ENCODE measurements at regions of chr12 and their contacts with region 1.

Region 1: GRCh38 chr12:122336015-122336946 is 70.0 kb upstream of the VPS33A start:
- DNase-seq: peak in 1 of 2 donors; percentile 65
- ATAC-seq: peak in 2 of 4 donors; percentile 36 to 38
- H3K4me3 ChIP-seq: no peak overlapping the region
- H3K27ac ChIP-seq: peak overlapping the region; percentile 33
- H3K4me1 ChIP-seq: peaks cover 6% of the 10 kb centered on the region
- H3K27me3 ChIP-seq: no peaks in the 10 kb centered on the region
- CTCF ChIP-seq: peak; percentile 60

Region 2: DNA sequence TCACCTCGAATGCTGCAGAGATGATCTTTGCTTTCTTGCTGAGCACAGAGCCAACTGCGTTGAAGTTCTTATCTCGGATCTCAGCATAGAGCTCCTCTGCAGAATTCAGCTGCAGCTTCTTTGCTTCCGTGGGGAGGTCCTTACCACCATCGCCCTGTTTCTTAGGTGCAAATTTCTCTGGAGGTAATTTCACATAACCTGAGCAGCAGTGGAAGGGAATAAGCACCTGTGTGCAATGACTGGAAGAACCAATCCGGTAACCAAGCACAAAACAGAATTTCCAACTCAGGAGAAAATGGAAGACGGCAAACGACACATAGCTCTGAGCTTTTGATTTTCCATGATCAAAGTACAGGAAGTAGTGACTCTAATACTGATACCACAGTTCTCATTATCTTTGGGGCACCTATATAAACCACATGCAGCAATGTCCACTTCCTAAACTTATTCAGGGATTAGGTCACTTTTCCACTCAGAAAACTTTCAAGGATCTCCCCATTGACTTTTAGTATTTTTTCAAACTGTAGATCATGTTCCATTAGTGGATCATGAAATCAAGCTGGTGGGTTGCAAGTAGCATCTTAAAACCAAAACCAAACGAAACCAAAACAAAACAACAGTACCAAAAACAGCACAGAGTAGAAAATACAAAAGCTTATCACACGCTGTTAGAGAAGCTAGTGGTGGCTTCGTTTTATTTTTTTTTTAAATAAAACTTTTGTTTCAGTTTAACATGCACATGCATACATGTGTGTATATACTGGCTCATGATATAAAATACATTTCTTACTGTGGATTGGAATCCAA is 91.5 kb before region 1 on chr12:
- intact Hi-C with region 1: no loop called
- DNase-seq: no peak
- ATAC-seq: no peak
- H3K4me3 ChIP-seq: no peak overlapping the region
- H3K27ac ChIP-seq: no peak overlapping the region
- H3K4me1 ChIP-seq: no peaks in the 10 kb centered on the region
- H3K27me3 ChIP-seq: no peaks in the 10 kb centered on the region
- CTCF ChIP-seq: no peak

Region 3: DNA sequence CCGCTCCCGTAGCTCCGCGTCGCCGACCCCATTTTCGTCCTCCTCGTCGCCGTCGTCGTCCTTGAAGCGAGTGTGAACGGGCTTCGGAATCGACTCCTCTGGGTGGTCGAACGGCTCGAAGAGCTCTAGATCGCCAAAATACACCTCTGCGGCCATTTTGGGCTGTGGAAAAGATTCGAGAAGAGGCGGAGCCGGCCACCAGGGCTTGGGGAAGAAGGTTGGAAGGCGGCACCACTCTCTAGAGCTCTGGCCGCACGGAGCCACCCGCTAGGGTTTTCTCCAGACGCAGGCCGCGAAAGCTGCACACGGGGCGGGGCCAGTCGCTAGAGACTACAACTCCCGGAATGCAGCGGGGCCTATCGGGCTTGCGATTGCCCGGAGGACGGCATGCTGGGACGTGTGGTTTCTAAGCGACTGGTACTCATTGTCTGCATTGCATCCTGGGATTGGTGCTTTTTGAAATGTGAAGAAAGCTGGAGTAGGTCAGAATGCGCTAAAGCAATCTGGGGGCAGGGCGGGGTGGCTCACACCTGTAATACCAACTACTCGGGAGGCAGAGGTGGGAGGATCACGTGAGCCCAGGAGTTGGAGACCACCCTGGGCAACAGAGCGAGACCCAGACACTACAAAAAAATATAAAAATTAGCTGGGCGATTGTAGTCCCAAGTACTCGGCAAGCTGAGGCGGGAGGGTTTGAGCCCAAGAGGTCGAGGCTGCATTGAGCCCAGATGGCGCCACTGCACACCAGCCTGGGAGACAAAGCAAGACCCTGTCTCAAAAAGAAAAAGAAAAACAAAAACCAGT is 164.6 kb after region 1 on chr12 and contains the start of gene ZCCHC8:
- intact Hi-C with region 1: loop called (anchors 5 to 10 kb)
- DNase-seq: peak; percentile 97 to 98
- ATAC-seq: peak; percentile 93 to 96 (median 95)
- H3K4me3 ChIP-seq: peak within 1 kb of the TSS; percentile 96
- H3K27ac ChIP-seq: peak within 1 kb of the TSS; percentile 99
- H3K4me1 ChIP-seq: peaks cover 36% of the 10 kb centered on the region
- H3K27me3 ChIP-seq: no peaks in the 10 kb centered on the region
- CTCF ChIP-seq: no peak
- total RNA-seq, gene ZCCHC8: 10.9 to 22.2 (median 14.3) TPM

Region 4: GRCh38 chr12:123319826-123320225 is 983.5 kb after region 1 on chr12:
- intact Hi-C with region 1: loop called in 1 of 2 experiments (anchors 10 kb)
- DNase-seq: no peak
- ATAC-seq: no peak
- H3K4me3 ChIP-seq: no peak overlapping the region
- H3K27ac ChIP-seq: no peak overlapping the region
- H3K4me1 ChIP-seq: no peaks in the 10 kb centered on the region
- H3K27me3 ChIP-seq: no peaks in the 10 kb centered on the region
- CTCF ChIP-seq: no peak

Measured in psoas muscle (tissue), 8 donors.